H1 (cell line): ENCODE measurements at regions of chr11 and their contacts with region 1.

Region 1: GRCh38 chr11:120229451-120230424 is 10.2 kb upstream of the POU2F3 start:
- DNase-seq: no peak
- H3K4me3 ChIP-seq: no peak overlapping the region
- H3K27ac ChIP-seq: no peak overlapping the region
- H3K4me1 ChIP-seq: peaks cover 0 to 3% (median under 1%) of the 10 kb centered on the region in 4 experiments; a peak in 3 of 7 replicates
- H3K27me3 ChIP-seq: 0 out of 7 replicates have a peak, but pooled peaks cover 0 to 3% (median 0%) of the 10 kb centered on the region in 4 experiments
- CTCF ChIP-seq: peak; percentile 39 to 74 (median 70)
- EP300 ChIP-seq: no peak
- POLR2A ChIP-seq: no peak
- RAD21 ChIP-seq: peak; percentile 86

Region 2: DNA sequence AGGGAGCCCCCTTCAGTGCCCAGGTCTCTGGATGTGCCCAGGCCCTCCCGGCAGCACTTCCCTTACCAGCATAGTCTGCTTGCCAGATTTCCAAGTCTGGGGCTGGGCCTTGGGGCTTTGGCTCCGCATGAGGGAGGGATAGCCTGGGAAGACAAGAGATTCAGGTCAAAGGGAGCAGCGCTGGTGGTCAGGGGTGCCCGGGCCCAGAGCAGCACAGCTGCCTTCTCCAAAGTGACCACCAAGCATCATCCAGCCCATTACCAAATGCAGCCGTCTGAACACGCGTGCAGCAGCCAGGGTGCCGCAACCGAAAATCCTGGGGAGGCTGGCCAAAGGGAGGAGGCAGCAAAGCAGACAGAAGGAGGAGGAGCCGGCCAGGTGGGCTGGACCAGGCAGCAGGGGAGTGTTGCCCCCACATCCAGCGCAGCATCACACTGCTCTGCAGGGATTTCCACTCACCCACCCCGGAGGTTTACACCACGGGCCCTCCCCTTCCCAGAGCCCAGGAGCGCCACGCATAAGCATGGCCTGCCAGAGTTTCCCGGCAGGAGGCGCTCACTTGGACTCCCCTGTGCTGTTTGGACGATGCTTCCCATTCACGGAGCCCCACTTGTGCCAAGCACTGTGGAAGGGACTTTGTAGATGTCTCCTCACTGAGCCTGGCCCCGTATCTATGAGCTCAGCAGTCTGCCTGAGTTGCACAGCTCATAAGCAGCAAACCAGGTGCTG is 114.3 kb before region 1 on chr11:
- CTCF ChIA-PET with region 1: interaction called, 31 read pairs
- POLR2A ChIA-PET with region 1: no interaction called
- DNase-seq: peak in 1 of 2 experiments; percentile 58
- H3K4me3 ChIP-seq: no peak overlapping the region
- H3K27ac ChIP-seq: no peak overlapping the region
- H3K4me1 ChIP-seq: peaks cover 0 to 5% (median 2%) of the 10 kb centered on the region in 4 experiments; a peak in 4 of 7 replicates
- H3K27me3 ChIP-seq: no peaks in the 10 kb centered on the region; a peak in 2 of 7 replicates
- CTCF ChIP-seq: peak; percentile 15 to 32 (median 30)
- EP300 ChIP-seq: no peak
- POLR2A ChIP-seq: no peak
- RAD21 ChIP-seq: 0 out of 4 replicates have a peak, but pooled peaks of 1 of the 2 experiments have one; percentile 16

Region 3: DNA sequence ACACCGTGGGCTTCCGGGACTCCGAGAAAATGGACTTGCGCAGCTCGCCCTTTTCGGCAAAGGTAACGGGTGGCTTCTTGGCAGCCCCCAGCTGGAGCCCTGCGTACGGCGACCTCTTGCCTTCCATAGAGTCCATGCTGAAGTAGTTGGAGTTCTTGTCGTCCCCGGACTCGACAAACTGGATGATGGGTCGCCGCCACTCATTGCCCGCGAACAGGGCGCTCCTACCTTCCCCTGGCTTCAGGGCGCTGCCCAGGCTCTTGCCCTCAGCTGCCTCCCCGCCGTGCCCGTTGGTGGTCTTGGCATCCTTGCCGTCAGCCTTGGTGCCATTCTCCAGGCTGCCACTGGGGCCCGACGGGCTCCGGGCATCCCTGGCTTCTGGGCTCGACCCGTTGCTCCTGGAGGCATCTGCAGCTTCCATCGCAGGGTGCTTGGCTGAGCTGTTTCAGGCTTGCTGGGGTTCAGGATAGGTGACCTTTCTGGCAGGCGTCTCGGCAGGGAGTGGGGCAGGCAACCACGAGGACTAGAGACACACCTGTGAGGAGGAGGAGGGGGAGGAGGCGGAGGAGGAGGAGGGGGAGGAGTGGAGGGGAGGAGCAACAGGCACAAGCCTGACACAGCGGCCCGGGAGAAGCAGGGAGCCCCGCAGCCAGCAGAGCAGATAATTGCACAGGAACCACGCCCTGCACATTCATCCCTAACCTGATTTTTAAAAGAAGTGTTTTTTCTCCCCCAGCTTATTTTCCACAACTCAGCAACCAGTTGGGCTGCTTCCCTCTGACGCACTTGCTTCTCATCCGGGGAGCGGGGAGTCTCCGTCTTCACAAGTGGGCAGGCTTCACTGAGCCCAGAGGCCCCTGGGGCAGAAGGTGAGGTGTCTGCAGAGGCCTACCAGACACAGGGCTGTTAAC is 91.9 kb before region 1 on chr11 and contains the start of gene TRIM29:
- CTCF ChIA-PET with region 1: interaction called, 16 read pairs
- POLR2A ChIA-PET with region 1: no interaction called
- DNase-seq: peak in 1 of 2 experiments; percentile 59
- H3K4me3 ChIP-seq: no peak within 1 kb of the TSS
- H3K27ac ChIP-seq: no peak within 1 kb of the TSS
- H3K4me1 ChIP-seq: peaks cover 0 to 4% (median 1%) of the 10 kb centered on the region in 4 experiments; a peak in 1 of 7 replicates
- H3K27me3 ChIP-seq: peaks cover 0 to 2% (median 0%) of the 10 kb centered on the region in 4 experiments; a peak in 2 of 7 replicates
- CTCF ChIP-seq: peak; percentile 3 to 41 (median 22); a peak in 2 of 4 replicates
- EP300 ChIP-seq: no peak
- POLR2A ChIP-seq: no peak
- RAD21 ChIP-seq: no peak; a peak in 1 of 4 replicates
- total RNA-seq, gene TRIM29: 0.43 TPM in 1 of 2 replicates, not detected in the other

Region 4: GRCh38 chr11:120210626-120211521 is 18.9 kb before region 1 on chr11 and contains the start of gene OAF:
- CTCF ChIA-PET with region 1: interaction called, 207 read pairs
- POLR2A ChIA-PET with region 1: no interaction called
- DNase-seq: peak; percentile 58 to 85
- H3K4me3 ChIP-seq: peak within 1 kb of the TSS; percentile 43 to 68 (median 58)
- H3K27ac ChIP-seq: no peak within 1 kb of the TSS
- H3K4me1 ChIP-seq: peaks cover 4 to 12% (median 8%) of the 10 kb centered on the region in 4 experiments
- H3K27me3 ChIP-seq: peaks cover 67 to 94% (median 87%) of the 10 kb centered on the region in 4 experiments
- CTCF ChIP-seq: no peak
- EP300 ChIP-seq: no peak
- POLR2A ChIP-seq: no peak
- RAD21 ChIP-seq: no peak
- total RNA-seq, gene OAF: 1.1 and 1.3 TPM in 2 replicates

Region 5: GRCh38 chr11:120248551-120249278 is 19.0 kb after region 1 on chr11:
- CTCF ChIA-PET with region 1: interaction called, 102 read pairs
- POLR2A ChIA-PET with region 1: no interaction called
- DNase-seq: no peak
- H3K4me3 ChIP-seq: no peak overlapping the region
- H3K27ac ChIP-seq: 0 out of 2 replicates have a peak overlapping the region, but pooled peaks have one; percentile 31
- H3K4me1 ChIP-seq: peaks cover 0 to 16% (median 5%) of the 10 kb centered on the region in 4 experiments
- H3K27me3 ChIP-seq: no peaks in the 10 kb centered on the region
- CTCF ChIP-seq: no peak
- EP300 ChIP-seq: peak in 1 of 2 experiments; percentile 17; a peak in 1 of 3 replicates
- POLR2A ChIP-seq: no peak
- RAD21 ChIP-seq: no peak

Region 6: GRCh38 chr11:120254788-120255518 is 25.2 kb after region 1 on chr11:
- CTCF ChIA-PET with region 1: interaction called, 102 read pairs
- POLR2A ChIA-PET with region 1: no interaction called
- DNase-seq: peak; percentile 73 to 75
- H3K4me3 ChIP-seq: peak overlapping the region in 3 of 4 experiments; percentile 29 to 50 (median 42); a peak in 6 of 8 replicates
- H3K27ac ChIP-seq: no peak overlapping the region
- H3K4me1 ChIP-seq: peaks cover 9 to 24% (median 14%) of the 10 kb centered on the region in 4 experiments
- H3K27me3 ChIP-seq: peaks cover 0 to 7% (median 3%) of the 10 kb centered on the region in 4 experiments; a peak in 4 of 7 replicates
- CTCF ChIP-seq: no peak
- EP300 ChIP-seq: no peak
- POLR2A ChIP-seq: no peak
- RAD21 ChIP-seq: no peak

Region 7: DNA sequence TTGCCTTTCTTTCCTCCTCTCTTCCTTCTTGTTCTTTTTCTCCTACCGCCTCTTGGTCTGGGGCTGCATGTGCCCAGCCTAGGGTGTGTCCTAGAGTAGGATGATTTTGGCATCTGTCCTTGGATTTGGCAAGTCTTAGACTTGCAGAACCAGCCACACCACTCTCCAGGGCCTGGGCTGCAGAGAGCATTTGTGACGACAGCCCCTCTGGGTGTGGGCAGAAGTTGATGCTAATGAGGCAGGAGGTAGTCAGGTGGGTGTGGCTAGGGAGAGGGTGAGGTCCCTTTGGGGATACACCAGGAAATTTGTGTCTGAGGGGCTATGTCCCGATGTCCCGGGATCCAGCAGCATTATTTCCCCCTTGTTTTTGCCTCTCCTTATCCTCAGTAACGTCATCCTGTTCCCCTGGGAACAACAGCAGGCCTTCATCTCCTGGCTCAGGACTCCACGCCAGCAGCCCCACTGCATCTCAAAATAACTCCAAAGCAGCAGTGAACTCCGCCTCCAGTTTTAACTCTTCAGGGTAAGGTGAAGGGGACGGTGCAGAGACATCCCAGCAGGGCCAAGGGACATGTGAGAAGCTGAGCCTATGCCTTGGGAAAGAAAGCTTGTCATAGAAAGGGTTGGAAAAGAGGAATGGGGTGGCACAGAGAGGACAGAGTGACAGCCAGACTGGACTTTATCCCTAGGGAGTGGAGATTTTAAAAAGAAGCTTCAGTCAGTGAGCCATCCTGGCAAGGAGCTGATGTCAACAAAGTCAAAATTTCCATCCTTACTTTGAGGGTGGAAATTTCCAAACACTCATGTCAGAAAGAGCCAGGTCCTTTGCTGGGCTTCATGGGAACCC is 87.3 kb after region 1 on chr11:
- CTCF ChIA-PET with region 1: interaction called, 1,412 read pairs
- POLR2A ChIA-PET with region 1: no interaction called
- DNase-seq: no peak
- H3K4me3 ChIP-seq: peak overlapping the region in 3 of 4 experiments; percentile 7 to 40 (median 15); a peak in 4 of 8 replicates
- H3K27ac ChIP-seq: no peak overlapping the region; the same call in 1 of the 2 replicates
- H3K4me1 ChIP-seq: peaks cover 0 to 7% (median 6%) of the 10 kb centered on the region in 4 experiments
- H3K27me3 ChIP-seq: no peaks in the 10 kb centered on the region
- CTCF ChIP-seq: no peak
- EP300 ChIP-seq: no peak
- POLR2A ChIP-seq: no peak; a peak in 1 of 3 replicates
- RAD21 ChIP-seq: no peak

Region 8: GRCh38 chr11:120343429-120343828 is 113.7 kb after region 1 on chr11:
- CTCF ChIA-PET with region 1: no interaction called
- POLR2A ChIA-PET with region 1: no interaction called
- DNase-seq: no peak
- H3K4me3 ChIP-seq: no peak overlapping the region
- H3K27ac ChIP-seq: no peak overlapping the region
- H3K4me1 ChIP-seq: peaks cover 0 to 5% (median 3%) of the 10 kb centered on the region in 4 experiments; a peak in 6 of 7 replicates
- H3K27me3 ChIP-seq: no peaks in the 10 kb centered on the region
- CTCF ChIP-seq: no peak
- EP300 ChIP-seq: no peak
- POLR2A ChIP-seq: no peak
- RAD21 ChIP-seq: no peak